A673 (cell line): ENCODE measurements at regions of chr7 and their contacts with region 1.

Region 1: GRCh38 chr7:44240983-44241510 is 40.3 kb downstream of the YKT6 start:
- DNase-seq: peak; percentile 85
- H3K4me3 ChIP-seq: peak overlapping the region; percentile 33
- H3K27ac ChIP-seq: no peak overlapping the region
- H3K4me1 ChIP-seq: no peaks in the 10 kb centered on the region
- H3K27me3 ChIP-seq: no peaks in the 10 kb centered on the region
- CTCF ChIP-seq: peak; percentile 89

Region 2: GRCh38 chr7:44477063-44477830 is 236.2 kb after region 1 on chr7:
- CTCF ChIA-PET with region 1: no interaction called
- POLR2A ChIA-PET with region 1: no interaction called
- intact Hi-C with region 1: loop called (anchors 1 kb)
- DNase-seq: peak; percentile 68
- H3K4me3 ChIP-seq: no peak overlapping the region
- H3K27ac ChIP-seq: no peak overlapping the region
- H3K4me1 ChIP-seq: no peaks in the 10 kb centered on the region
- H3K27me3 ChIP-seq: no peaks in the 10 kb centered on the region
- CTCF ChIP-seq: peak; percentile 85

Region 3: DNA sequence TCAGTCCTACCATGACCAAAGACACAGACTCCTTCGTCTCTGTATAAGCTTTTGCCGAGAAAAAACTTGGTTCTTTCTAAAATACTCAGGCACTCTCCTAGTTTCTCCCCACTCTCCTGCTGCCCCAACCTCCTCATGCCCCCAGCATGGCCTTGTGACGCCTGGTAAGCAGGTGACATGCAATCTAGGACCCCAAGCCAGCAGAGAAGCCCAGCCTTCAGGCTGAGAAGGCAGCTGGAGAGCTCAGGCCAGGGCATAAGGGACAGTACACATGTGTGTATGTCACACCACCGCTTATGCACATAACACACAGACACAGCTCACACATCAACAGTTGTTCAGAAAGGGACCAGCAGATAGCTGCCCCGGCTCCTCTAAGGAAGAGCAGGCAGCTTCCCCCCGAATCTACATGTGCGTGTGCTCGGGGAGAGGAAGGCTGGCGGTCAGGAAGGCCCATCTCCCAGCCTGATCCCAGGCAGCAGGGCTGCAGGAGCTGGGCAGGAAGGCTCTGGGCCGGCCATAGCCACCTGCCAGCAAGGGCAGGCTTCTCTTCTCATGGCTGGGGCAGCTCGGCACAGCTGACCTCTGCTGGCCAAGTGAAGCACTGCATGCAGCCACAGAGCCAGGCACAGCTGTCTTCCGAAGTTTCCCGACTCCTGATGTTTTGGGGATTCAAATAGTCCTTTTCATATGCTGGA is 324.2 kb after region 1 on chr7:
- CTCF ChIA-PET with region 1: interaction called, 4 read pairs
- POLR2A ChIA-PET with region 1: no interaction called
- intact Hi-C with region 1: loop called (anchors 5 kb)
- DNase-seq: peak; percentile 70
- H3K4me3 ChIP-seq: no peak overlapping the region
- H3K27ac ChIP-seq: no peak overlapping the region
- H3K4me1 ChIP-seq: no peaks in the 10 kb centered on the region
- H3K27me3 ChIP-seq: no peaks in the 10 kb centered on the region
- CTCF ChIP-seq: peak; percentile 93